ENCODE measurements at regions of chr1 and their contacts with region 1.

Region 1: GRCh38 chr1:207828485-207829158 is 76.8 kb downstream of the CD46 start:
- DNase-seq: peak; percentile 65
- H3K4me3 Mint-ChIP-seq: no peak overlapping the region
- H3K27ac Mint-ChIP-seq: peak overlapping the region; percentile 16
- H3K4me1 Mint-ChIP-seq: peaks cover 97% of the 10 kb centered on the region
- H3K27me3 Mint-ChIP-seq: no peaks in the 10 kb centered on the region

Region 2: GRCh38 chr1:207811920-207812720 is 16.5 kb before region 1 on chr1:
- CTCF ChIA-PET with region 1: interaction called, 7 read pairs
- POLR2A ChIA-PET with region 1: interaction called, 15 read pairs
- DNase-seq: peak; percentile 18
- H3K4me3 Mint-ChIP-seq: no peak overlapping the region
- H3K27ac Mint-ChIP-seq: no peak overlapping the region
- H3K4me1 Mint-ChIP-seq: peaks cover 53% of the 10 kb centered on the region
- H3K27me3 Mint-ChIP-seq: no peaks in the 10 kb centered on the region

Region 3: DNA sequence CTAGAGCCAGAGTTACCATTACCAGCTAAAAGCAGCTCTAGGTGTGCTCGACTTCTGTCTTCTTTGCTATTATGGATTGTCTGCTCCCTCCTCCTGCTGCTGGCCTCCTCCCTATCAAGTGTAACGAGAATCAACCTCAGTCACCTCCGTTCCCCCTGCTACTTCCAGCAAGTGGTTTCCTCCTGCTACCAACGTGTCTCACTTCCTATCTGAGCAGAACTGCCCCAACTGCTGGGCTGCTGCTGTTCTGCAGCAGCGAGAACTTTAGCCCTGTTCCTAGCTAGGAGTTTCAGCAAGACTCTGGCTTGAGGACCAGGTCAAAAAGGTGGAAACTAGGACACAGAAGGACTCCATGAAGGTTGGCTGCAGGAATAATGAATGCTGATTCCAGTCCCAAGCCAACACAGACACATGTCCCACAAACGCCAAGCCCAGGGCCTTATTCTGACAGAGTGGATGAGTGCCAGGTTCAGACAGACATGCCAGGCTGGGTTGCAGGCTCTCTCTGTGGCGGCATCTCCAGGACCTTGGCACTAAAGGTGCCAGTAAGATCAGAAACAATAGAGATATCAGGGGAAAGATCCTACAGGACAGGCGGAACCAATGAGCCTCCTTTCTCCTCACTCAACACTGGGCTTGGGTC is 35.4 kb after region 1 on chr1:
- CTCF ChIA-PET with region 1: interaction called, 297 read pairs
- POLR2A ChIA-PET with region 1: interaction called, 151 read pairs
- DNase-seq: peak; percentile 71
- H3K4me3 Mint-ChIP-seq: peak overlapping the region; percentile 50
- H3K27ac Mint-ChIP-seq: peak overlapping the region; percentile 86
- H3K4me1 Mint-ChIP-seq: peaks cover 65% of the 10 kb centered on the region
- H3K27me3 Mint-ChIP-seq: no peaks in the 10 kb centered on the region

Region 4: GRCh38 chr1:207876131-207876530 is 47.5 kb after region 1 on chr1:
- CTCF ChIA-PET with region 1: interaction called, 297 read pairs
- POLR2A ChIA-PET with region 1: interaction called, 151 read pairs
- DNase-seq: no peak
- H3K4me3 Mint-ChIP-seq: no peak overlapping the region
- H3K27ac Mint-ChIP-seq: no peak overlapping the region
- H3K4me1 Mint-ChIP-seq: peaks cover 59% of the 10 kb centered on the region
- H3K27me3 Mint-ChIP-seq: no peaks in the 10 kb centered on the region